HAP-1 (cell line): ENCODE measurements at regions of chr9 and their contacts with region 1.

Region 1: GRCh38 chr9:18442629-18443491 is 31.1 kb upstream of the ADAMTSL1 start:
- DNase-seq: peak; percentile 83
- H3K4me3 ChIP-seq: no peak overlapping the region
- H3K4me1 ChIP-seq: no peaks in the 10 kb centered on the region
- H3K27me3 ChIP-seq: no peaks in the 10 kb centered on the region

Region 2: GRCh38 chr9:18255158-18255629 is 187.7 kb before region 1 on chr9:
- in situ Hi-C with region 1: loop called (anchors 25 kb)
- DNase-seq: peak; percentile 53 to 87
- H3K4me3 ChIP-seq: no peak overlapping the region
- H3K4me1 ChIP-seq: peaks cover 3% of the 10 kb centered on the region; the same call in 1 of the 2 replicates
- H3K27me3 ChIP-seq: no peaks in the 10 kb centered on the region

Region 3: GRCh38 chr9:19048966-19049916 is 606.4 kb after region 1 on chr9 and contains the start of gene RRAGA:
- in situ Hi-C with region 1: loop called (anchors 25 kb)
- DNase-seq: peak; percentile 96 to 97
- H3K4me3 ChIP-seq: peak within 1 kb of the TSS; percentile 57
- H3K4me1 ChIP-seq: peaks cover 38% of the 10 kb centered on the region
- H3K27me3 ChIP-seq: no peaks in the 10 kb centered on the region